Dendritic cell treated with granulocyte-macrophage colony-stimulating factor and Interleukin-4, amounts not matched to agents 40 ng/mL and 50 ng/mL, for 4 days (primary cell): ENCODE measurements at regions of chr6 and their contacts with region 1.

Region 1: DNA sequence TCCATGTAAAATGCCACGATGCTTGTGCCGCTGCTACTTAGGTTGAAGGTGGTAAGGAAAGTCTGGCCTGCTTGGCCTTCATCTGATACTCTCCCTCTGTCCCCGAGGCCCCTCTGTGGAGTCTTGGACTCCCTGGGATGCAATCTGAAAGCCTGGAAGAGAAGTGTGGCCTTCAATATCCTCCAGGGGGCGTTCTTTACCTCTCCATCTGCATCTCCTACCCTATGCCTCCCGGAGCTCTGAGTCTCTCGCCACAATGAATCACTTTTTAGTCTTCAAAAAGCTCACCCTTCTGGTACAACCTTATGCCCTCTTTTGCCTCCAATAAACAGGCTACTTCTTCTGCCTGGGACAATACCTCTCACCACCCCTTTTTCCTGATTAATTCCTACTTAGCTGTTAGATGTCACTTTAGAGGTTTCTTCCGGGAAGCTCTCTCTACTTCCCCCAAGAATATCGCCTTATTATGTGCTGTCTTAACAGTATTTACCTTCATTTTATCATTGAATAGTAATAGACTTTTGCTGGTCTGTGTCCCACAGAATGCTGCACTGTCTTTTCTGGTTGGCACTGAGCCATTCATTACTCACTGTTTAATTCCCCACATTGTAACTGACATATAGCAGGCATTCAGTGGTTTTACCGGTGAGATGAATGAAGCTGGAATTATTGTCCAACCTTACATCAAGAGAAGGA is 13.9 kb upstream of the ATG5 start:
- H3K4me3 Mint-ChIP-seq: peak overlapping the region; percentile 40
- H3K27ac Mint-ChIP-seq: no peak overlapping the region
- H3K4me1 Mint-ChIP-seq: peaks cover 8% of the 10 kb centered on the region
- H3K27me3 Mint-ChIP-seq: peaks cover 6% of the 10 kb centered on the region

Region 2: GRCh38 chr6:106300944-106301343 is 38.5 kb before region 1 on chr6:
- intact Hi-C with region 1: no loop called
- H3K4me3 Mint-ChIP-seq: no peak overlapping the region
- H3K27ac Mint-ChIP-seq: no peak overlapping the region
- H3K4me1 Mint-ChIP-seq: no peaks in the 10 kb centered on the region
- H3K27me3 Mint-ChIP-seq: no peaks in the 10 kb centered on the region

Region 3: DNA sequence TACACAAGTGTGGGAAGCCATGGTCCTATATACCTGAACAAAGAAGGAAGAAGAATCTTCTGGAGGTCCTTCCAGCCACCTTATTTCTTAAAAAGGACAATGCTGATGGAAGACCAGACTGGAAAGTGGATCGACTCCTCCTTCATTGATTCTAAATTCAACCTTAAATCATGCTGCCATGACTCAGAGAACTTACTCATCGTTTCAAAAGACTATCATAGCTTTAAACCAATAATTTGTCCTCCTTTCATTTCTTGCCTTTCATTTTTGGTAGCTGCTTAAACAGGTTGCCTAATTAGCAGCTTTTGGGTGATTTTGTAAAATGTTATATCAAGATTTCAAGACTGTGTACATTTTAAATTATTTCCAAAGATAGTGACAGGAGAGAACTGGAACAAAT is 229.0 kb after region 1 on chr6:
- intact Hi-C with region 1: loop called (anchors 5 kb)
- H3K4me3 Mint-ChIP-seq: no peak overlapping the region
- H3K27ac Mint-ChIP-seq: no peak overlapping the region
- H3K4me1 Mint-ChIP-seq: peaks cover 24% of the 10 kb centered on the region
- H3K27me3 Mint-ChIP-seq: no peaks in the 10 kb centered on the region

Region 4: DNA sequence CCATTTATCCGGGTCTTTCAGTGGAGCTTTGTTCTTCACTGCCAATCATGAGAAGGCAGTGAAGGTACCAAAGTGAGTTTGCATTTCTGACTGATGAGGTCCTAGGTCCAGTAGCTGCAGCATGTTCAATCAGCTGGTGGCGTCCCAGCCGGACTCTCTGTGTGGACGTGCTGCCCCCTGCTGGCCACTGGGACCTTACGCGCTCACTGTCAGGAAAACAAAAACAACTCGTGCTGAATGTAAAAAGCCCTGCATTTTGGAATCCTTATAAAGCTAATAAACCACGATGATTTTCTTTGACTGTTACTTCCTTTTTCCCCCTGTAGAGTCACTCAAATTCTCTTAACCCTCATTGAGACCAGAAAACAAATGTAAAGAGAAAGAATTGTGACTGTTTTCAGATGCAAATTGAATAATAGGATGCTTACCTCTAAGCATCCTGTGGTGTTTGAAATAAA is 640.0 kb after region 1 on chr6:
- intact Hi-C with region 1: loop called (anchors 5 kb)
- H3K4me3 Mint-ChIP-seq: no peak overlapping the region
- H3K27ac Mint-ChIP-seq: no peak overlapping the region
- H3K4me1 Mint-ChIP-seq: peaks cover 1% of the 10 kb centered on the region
- H3K27me3 Mint-ChIP-seq: peaks cover 47% of the 10 kb centered on the region

Region 5: DNA sequence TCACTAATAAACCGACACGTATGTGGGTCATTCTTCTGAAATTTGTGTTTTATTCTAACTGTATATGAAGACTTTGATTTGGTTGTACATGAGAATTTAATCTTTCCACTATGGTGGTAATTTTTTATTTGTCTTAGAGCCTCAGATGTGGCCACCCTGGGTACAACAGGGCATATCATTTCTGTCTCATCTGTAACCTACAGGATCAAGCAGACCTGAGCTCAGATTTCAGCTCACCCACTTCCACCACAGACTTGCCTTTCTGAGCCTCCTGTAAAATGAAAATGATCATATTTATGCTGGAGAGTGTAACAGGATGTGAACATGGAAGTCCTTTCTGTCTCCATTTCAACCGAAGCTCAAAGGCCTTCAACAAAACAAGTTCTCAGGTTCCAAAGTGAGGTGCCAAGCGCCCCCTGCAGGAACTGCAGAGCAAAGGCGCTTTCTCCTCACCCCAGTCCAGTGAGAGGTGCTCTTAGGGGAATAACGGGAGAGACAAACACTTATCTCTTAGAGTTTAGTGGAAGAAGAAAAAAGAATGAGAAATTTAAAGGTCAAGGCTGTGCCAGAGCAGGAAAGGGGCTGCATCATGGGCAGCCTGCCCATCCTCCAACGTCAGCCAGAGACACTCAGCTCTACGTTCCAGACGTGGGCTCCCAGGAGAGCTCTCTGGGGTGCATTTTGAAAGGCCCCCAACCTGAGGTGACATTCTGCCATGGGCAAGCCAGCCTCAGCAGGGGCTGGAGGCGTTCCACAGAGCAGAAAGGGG is 658.1 kb after region 1 on chr6:
- intact Hi-C with region 1: loop called (anchors 5 kb)
- H3K4me3 Mint-ChIP-seq: no peak overlapping the region
- H3K27ac Mint-ChIP-seq: no peak overlapping the region
- H3K4me1 Mint-ChIP-seq: no peaks in the 10 kb centered on the region
- H3K27me3 Mint-ChIP-seq: no peaks in the 10 kb centered on the region